ENCODE measurements at regions of chr11 and their contacts with region 1.

Region 1: DNA sequence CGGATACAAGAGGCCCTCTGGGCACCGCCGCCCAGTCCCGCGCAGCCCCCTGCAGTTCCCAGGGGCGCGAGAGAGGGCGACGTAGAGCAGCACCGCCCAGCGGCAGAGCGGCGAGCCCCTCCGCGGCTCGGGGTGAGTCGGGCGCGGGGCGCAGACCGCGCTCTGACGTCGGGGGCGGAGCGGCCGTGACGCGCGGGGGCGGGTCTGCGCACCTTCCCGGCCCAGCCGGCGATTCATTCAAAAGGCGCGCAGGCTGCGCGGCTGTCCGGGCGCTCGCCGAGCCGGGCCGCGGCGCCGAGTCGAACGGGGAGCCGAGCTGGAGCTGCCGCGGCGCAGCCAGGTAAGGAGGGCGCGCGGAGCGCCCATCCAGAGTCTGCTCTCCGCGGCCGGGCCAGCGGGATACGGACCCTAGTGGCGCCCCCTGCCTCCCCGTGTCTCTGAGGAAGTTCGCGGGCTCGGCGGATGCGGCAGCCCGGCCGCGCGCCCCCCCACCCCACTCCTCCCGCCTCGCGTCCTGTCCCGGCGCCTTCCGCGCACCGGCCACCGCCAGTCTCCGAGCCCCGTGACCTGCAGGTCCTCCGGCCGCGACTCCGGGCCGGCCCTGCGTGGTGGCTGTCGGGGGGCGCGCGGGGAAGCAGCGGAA is at the start of gene RELT:
- DNase-seq: peak; percentile 94
- H3K4me3 Mint-ChIP-seq: peak within 1 kb of the TSS; percentile 91
- H3K27ac Mint-ChIP-seq: peak within 1 kb of the TSS; percentile 90
- H3K4me1 Mint-ChIP-seq: peaks cover 28% of the 10 kb centered on the region
- H3K27me3 Mint-ChIP-seq: no peaks in the 10 kb centered on the region
- total RNA-seq, gene RELT: 34.6 and 37.6 TPM in 2 replicates

Region 2: DNA sequence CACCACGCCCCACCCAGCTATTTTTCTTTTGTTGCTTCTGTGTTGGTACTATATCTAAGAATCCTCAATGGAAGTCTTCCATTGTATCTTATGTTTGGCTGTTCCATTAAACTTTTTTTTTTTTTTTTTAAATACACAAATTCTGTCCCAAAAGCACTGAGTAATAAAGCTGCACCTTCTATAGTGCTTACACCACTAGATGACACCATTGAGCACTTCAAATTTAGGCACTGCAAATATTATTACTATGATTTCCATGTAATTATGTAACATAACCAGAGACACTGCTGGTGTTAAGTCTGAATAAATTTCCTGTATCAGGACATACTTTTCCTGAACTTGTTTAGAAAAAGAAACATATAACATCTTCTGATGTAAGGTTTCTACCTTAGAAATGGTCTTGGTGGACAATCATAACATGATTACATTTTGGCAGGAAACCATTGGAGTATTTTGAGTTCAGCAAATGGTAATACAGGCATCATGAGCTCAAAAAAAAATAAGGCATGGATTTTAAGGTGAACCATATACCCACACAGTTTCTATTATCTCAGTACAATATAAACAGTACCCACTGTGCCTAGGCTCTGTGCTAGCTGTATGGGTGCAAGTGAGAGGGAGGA is 451.6 kb before region 1 on chr11:
- intact Hi-C with region 1: no loop called
- DNase-seq: no peak
- H3K4me3 Mint-ChIP-seq: no peak overlapping the region
- H3K27ac Mint-ChIP-seq: no peak overlapping the region
- H3K4me1 Mint-ChIP-seq: peaks cover 7% of the 10 kb centered on the region
- H3K27me3 Mint-ChIP-seq: no peaks in the 10 kb centered on the region

Region 3: DNA sequence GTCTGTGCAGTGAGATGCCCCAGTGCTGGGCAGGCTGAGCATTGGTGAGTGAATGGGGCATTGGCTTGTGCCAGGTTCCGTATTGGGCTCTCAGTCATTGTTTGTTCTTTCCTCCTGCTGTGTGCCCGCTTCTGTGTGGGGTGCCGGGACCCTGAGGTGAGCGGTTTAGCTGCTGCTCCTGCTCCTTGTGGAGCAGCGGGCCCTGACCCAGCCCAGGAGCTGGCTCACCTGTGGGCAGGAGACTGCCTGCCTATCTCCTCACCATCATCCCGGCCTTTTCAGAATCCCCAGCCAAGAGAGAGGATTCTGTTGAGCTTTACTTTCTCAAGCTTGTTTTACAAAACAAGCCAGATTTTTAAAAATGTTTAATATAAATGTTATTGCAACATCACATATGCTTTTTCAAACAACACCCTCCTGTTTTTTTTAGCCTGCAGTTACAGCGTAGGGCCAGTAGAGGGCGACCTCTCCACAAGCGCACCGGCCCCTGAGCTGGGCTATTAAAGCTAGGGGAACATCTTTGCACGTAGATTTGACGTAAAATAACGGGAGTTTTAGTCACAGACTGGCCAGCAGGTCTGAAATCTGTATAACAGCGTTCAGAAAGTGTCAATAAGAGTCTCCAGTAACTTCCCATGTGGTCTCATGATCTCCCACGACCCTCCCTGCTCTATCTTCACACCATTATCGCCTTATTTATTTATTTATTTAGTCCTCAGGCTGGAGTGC is 25.2 kb before region 1 on chr11:
- intact Hi-C with region 1: loop called (anchors 1 kb)
- DNase-seq: peak; percentile 46
- H3K4me3 Mint-ChIP-seq: no peak overlapping the region
- H3K27ac Mint-ChIP-seq: no peak overlapping the region
- H3K4me1 Mint-ChIP-seq: peaks cover 23% of the 10 kb centered on the region
- H3K27me3 Mint-ChIP-seq: peaks cover 8% of the 10 kb centered on the region

Region 4: GRCh38 chr11:73393479-73394380 is 17.4 kb after region 1 on chr11:
- intact Hi-C with region 1: loop called (anchors 1 kb)
- DNase-seq: peak; percentile 55
- H3K4me3 Mint-ChIP-seq: no peak overlapping the region
- H3K27ac Mint-ChIP-seq: no peak overlapping the region
- H3K4me1 Mint-ChIP-seq: peaks cover 6% of the 10 kb centered on the region
- H3K27me3 Mint-ChIP-seq: no peaks in the 10 kb centered on the region

Region 5: DNA sequence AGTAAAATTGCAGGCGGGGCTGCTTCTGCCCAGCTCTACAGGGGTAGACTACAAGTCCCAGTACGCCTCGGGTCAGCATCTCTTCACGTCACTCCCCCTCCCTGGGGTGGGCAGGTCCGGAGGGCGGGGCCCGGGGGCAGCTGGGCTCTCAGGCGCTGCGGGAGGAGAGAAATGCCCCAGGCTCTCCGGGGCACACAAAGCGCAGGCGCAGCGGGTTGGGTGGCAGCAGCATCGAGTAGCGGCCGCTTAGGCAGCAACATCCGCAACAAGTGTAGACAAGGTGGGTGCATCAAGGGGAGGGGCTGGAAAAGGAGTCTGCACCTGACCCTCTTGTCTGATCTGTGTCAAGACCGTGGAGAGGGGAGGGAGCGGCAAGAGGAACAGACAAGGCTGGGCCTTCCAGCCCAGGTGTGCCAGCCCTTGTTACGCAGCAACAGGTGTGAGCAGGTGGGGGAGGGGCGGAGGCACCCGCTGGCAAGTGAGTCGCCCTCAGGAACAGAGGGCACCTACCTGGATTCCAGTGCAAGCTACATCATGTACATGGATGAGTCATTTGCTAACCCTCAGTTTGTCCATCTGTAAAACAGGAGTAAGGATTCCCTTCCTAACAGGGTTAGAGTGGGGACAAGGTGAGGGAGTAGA is 271.3 kb after region 1 on chr11:
- intact Hi-C with region 1: loop called (anchors 1 kb)
- DNase-seq: peak; percentile 84
- H3K4me3 Mint-ChIP-seq: peak overlapping the region; percentile 54
- H3K27ac Mint-ChIP-seq: no peak overlapping the region
- H3K4me1 Mint-ChIP-seq: peaks cover 14% of the 10 kb centered on the region
- H3K27me3 Mint-ChIP-seq: peaks cover 9% of the 10 kb centered on the region

Region 6: DNA sequence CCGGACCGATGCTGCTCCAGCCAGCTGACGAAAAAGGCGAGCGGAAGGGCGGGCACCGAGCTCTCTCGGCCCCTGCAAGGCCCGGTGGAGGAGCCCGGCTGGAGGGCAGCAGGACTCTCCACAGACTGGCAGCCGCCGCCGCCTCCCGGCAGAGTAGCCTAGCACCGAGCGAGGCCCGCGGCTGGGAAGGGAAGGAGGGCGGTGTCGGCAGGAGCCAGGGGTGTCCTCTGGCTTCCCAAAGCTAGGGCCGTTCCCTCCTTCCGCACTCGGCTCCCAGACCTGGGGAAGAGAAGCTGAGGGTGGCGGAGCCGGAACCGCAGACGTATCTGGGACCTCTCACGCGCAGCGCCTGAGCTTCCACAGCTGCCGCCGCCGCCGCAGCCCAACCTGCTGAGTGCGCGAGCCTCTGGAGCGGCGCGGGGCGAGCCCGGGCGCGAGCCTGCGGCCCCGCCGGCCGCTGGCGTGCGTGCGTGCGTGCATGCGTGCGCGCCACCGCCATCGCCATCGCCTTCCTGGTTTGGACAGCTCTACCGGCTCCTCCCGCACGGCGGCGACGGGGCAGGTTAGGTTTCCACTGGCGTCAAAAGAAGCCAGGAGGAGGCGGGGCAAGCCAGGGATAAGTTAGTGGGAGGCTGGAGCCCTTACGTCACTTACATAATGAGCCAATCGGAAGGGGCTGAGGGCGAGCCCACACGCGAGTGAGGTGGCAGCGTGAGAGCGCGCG is 384.6 kb after region 1 on chr11 and contains the start of gene RAB6A:
- intact Hi-C with region 1: loop called (anchors 1 kb)
- DNase-seq: peak; percentile 100
- H3K4me3 Mint-ChIP-seq: peak within 1 kb of the TSS; percentile 98
- H3K27ac Mint-ChIP-seq: peak within 1 kb of the TSS; percentile 97
- H3K4me1 Mint-ChIP-seq: peaks cover 41% of the 10 kb centered on the region
- H3K27me3 Mint-ChIP-seq: peaks cover 3% of the 10 kb centered on the region
- total RNA-seq, gene RAB6A: 81.9 and 88.0 TPM in 2 replicates

Region 7: DNA sequence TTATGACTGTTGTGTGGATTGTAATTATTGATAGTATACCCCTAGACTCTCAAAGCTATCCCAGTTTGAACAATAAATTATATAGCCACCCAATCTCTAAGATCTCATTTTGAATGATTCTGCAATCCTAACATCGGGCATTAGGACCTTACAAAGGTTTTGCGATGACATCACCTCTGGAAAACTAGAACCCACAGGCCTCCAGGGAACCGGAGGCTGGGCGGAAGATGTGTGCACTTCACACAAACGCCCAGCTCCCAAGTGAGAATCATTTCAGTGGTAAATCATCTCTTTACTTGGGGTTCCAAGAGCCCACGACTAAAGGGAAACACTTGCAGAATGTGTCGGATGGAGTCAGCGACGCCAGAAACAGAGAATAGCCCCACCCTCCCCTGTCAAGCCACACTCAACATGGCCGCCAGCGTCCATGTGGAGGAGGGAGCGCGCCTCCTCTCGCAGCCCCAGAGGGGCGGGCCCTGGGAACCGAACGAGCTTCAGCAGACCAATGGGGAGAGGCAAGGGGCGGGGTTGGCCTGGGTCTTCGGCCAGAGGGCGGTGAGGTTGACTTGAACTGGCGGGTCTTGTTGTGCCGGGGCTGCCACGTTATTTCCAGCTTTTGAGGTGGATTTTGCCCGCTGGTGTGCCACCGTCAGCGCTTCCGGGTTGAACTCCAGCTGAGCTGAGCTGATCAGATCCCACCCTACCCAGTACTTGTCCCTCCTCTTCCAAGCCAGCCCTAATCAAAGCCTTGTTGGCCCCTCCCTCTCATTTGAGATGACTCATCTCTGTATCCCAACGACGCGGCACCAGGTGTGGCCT is 403.0 kb after region 1 on chr11:
- intact Hi-C with region 1: loop called (anchors 1 kb)
- DNase-seq: peak; percentile 97
- H3K4me3 Mint-ChIP-seq: peak overlapping the region; percentile 90
- H3K27ac Mint-ChIP-seq: peak overlapping the region; percentile 99
- H3K4me1 Mint-ChIP-seq: peaks cover 10% of the 10 kb centered on the region
- H3K27me3 Mint-ChIP-seq: no peaks in the 10 kb centered on the region

Region 8: DNA sequence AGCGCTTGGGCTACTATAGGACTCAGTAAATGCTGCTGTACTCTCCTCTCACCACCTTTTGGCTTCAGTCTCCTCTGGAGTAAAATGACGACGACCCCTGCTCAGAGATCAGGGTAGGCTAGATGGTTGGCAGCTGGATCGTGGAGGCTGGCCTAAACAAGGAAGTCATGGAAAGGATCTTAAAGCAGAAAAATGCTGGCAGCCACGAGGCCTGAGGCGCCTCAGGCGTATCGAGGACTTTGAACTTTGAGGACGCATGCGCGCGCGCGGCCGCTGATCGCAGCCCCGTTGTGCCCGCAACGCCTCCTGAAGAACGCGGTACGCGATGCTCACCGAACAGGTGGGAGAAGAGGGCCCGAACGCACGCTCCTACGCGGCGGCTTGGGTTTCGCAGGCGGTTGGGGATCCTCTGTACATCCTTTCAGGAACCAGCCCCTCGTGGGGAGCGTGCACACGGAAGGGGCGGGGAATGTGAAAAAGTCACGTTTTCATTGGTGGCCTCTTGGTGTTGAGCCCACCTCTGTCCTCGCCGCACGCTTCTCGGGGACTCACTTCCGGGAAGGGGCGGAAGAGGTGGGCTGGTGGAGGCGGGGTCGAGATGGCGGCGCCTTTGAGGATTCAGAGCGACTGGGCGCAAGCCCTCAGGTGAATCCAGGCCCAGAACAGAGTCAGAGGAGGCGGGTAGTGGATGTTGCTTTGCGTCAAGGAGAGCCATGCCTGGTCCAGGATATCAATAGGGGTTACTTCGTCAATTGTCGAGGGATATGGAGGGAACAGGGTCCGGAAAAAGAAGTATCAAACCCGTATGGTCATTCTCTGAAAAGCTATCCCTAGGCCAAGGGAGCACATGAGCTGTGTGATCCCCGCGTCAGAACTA is 500.4 kb after region 1 on chr11 and contains the starts of genes COA4 and PAAF1:
- intact Hi-C with region 1: loop called (anchors 10 kb)
- DNase-seq: peak; percentile 92
- H3K4me3 Mint-ChIP-seq: peak within 1 kb of the TSS; percentile 93
- H3K27ac Mint-ChIP-seq: peak within 1 kb of the TSS; percentile 100
- H3K4me1 Mint-ChIP-seq: peaks cover 30% of the 10 kb centered on the region
- H3K27me3 Mint-ChIP-seq: no peaks in the 10 kb centered on the region
- total RNA-seq, gene COA4: 99.1 and 102 TPM in 2 replicates
- total RNA-seq, gene PAAF1: 22.4 and 25.0 TPM in 2 replicates